ENCODE measurements at regions of chr12 and their contacts with region 1.

Region 1: GRCh38 chr12:38906482-38907170 is 1.2 kb upstream of the CPNE8 start:
- DNase-seq: peak; percentile 92
- H3K4me3 ChIP-seq: peak overlapping the region; percentile 43
- H3K27ac ChIP-seq: no peak overlapping the region
- H3K4me1 ChIP-seq: no peaks in the 10 kb centered on the region
- H3K27me3 ChIP-seq: peaks cover 15% of the 10 kb centered on the region
- CTCF ChIP-seq: peak; percentile 96

Region 2: GRCh38 chr12:38332814-38333213 is 573.8 kb before region 1 on chr12:
- CTCF ChIA-PET with region 1: no interaction called
- POLR2A ChIA-PET with region 1: no interaction called
- intact Hi-C with region 1: loop called (anchors 5 kb)
- DNase-seq: no peak
- H3K4me3 ChIP-seq: no peak overlapping the region
- H3K27ac ChIP-seq: no peak overlapping the region
- H3K4me1 ChIP-seq: no peaks in the 10 kb centered on the region
- H3K27me3 ChIP-seq: no peaks in the 10 kb centered on the region
- CTCF ChIP-seq: no peak

Region 3: DNA sequence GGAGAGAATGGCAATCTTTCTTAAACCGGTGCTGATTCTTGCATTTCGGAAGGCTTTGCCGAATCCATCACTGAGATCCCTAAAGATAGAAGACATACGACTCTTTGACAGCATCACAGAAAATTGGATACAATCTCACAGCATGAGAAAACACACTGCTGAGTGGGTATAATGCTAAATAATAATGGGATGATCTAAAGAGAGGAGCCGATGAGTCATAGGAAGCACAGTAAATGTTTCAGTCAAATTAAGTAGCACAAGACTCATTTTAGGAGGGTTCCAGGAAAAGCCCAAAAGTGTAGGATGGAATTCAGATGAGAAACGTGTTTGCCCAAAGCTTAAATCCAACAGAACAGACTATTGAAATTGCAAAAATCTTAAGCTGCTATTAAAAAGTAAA is 82.9 kb before region 1 on chr12:
- CTCF ChIA-PET with region 1: no interaction called
- POLR2A ChIA-PET with region 1: no interaction called
- intact Hi-C with region 1: loop called (anchors 5 kb)
- DNase-seq: peak; percentile 87
- H3K4me3 ChIP-seq: no peak overlapping the region
- H3K27ac ChIP-seq: no peak overlapping the region
- H3K4me1 ChIP-seq: peaks cover 14% of the 10 kb centered on the region
- H3K27me3 ChIP-seq: no peaks in the 10 kb centered on the region
- CTCF ChIP-seq: no peak

Region 4: GRCh38 chr12:39272871-39273770 is 366.5 kb after region 1 on chr12:
- CTCF ChIA-PET with region 1: interaction called, 9 read pairs
- POLR2A ChIA-PET with region 1: no interaction called
- intact Hi-C with region 1: loop called (anchors 2 kb)
- DNase-seq: peak; percentile 77
- H3K4me3 ChIP-seq: no peak overlapping the region
- H3K27ac ChIP-seq: no peak overlapping the region
- H3K4me1 ChIP-seq: peaks cover 25% of the 10 kb centered on the region
- H3K27me3 ChIP-seq: no peaks in the 10 kb centered on the region
- CTCF ChIP-seq: peak; percentile 80

Region 5: DNA sequence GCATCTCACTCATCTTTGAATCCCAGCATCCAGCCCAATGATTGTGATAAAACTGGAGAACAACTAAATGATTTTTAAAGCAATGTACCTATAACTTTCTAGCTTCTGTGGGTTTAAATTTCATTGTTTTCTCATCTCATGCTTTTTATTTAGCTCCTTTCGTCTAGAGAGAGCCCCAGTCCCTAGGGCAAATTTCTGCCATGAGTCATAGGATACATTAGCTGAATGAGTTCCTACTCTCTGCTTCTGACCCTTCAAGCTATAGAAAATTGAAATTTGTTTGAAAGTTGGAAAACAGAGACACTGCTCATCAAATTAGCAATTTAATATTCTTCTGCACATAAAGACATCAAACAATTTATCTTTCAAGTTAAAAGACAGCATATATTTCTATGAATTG is 422.4 kb after region 1 on chr12:
- CTCF ChIA-PET with region 1: no interaction called
- POLR2A ChIA-PET with region 1: no interaction called
- intact Hi-C with region 1: no loop called
- DNase-seq: peak; percentile 2
- H3K4me3 ChIP-seq: no peak overlapping the region
- H3K27ac ChIP-seq: no peak overlapping the region
- H3K4me1 ChIP-seq: no peaks in the 10 kb centered on the region
- H3K27me3 ChIP-seq: no peaks in the 10 kb centered on the region
- CTCF ChIP-seq: no peak

Measured in A673 (cell line).